Activated CD8-positive, alpha-beta T cell treated with anti-CD3 and anti-CD28 coated beads, Interleukin-2, amount 10 ng/mL, durations not matched to agents 7 days and 5 days (primary cell): ENCODE measurements at regions of chr13 and their contacts with region 1.

Region 1: DNA sequence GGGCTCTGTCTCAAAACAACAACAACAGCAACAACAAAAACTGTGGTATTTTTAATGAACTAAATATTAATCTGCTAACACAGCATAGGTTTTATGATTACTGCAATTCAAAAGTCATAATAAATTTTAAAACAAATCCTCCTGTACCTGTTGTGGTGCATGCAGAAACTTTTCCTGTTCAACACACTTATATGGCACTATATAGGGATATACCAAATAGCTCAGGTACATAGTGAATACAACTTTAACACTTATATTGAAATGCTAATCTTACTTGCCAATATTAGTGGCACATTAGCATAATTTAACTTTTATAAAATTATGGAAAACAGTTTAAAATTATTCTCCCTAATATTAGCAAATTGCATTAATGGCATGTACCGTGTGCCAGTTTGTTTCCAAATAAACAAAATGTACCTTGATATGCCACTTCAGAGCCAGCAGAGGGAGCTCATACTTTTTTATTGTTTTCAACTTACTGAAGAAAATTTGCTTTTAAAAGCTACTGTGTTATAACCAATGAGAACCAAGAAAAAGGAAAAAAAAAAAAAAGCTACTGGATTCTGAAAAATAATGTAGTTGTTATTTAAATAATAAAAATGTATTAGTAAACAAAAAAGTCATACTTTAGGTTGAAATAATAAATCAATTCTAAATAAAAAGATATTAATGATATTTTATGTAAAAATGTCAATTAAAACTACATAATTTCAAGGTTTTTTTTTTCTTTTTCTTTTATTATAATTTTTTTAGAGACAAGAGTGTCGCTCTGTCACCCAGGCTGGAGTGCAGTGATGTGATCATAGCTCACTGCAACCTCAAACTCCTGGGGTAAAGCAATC is 18.0 kb upstream of the RBM26 start:
- DNase-seq: no peak
- ATAC-seq: no peak
- H3K4me3 Mint-ChIP-seq: no peak overlapping the region
- H3K27ac Mint-ChIP-seq: no peak overlapping the region
- H3K4me1 Mint-ChIP-seq: peaks cover 11% of the 10 kb centered on the region
- H3K27me3 Mint-ChIP-seq: peaks cover 1% of the 10 kb centered on the region

Region 2: GRCh38 chr13:79405829-79406596 is 18.0 kb before region 1 on chr13 and contains the start of gene RBM26:
- CTCF ChIA-PET with region 1: interaction called, 18 read pairs
- POLR2A ChIA-PET with region 1: no interaction called
- DNase-seq: peak; percentile 97
- ATAC-seq: peak; percentile 90
- H3K4me3 Mint-ChIP-seq: no peak within 1 kb of the TSS
- H3K27ac Mint-ChIP-seq: peak within 1 kb of the TSS; percentile 97
- H3K4me1 Mint-ChIP-seq: peaks cover 22% of the 10 kb centered on the region
- H3K27me3 Mint-ChIP-seq: no peaks in the 10 kb centered on the region
- total RNA-seq, gene RBM26: 50.6 to 52.0 TPM

Region 3: GRCh38 chr13:79445968-79446645 is 22.1 kb after region 1 on chr13:
- CTCF ChIA-PET with region 1: interaction called, 19 read pairs
- POLR2A ChIA-PET with region 1: interaction called, 5 read pairs
- DNase-seq: no peak
- ATAC-seq: peak; percentile 40
- H3K4me3 Mint-ChIP-seq: no peak overlapping the region
- H3K27ac Mint-ChIP-seq: no peak overlapping the region
- H3K4me1 Mint-ChIP-seq: peaks cover 50% of the 10 kb centered on the region
- H3K27me3 Mint-ChIP-seq: no peaks in the 10 kb centered on the region

Region 4: DNA sequence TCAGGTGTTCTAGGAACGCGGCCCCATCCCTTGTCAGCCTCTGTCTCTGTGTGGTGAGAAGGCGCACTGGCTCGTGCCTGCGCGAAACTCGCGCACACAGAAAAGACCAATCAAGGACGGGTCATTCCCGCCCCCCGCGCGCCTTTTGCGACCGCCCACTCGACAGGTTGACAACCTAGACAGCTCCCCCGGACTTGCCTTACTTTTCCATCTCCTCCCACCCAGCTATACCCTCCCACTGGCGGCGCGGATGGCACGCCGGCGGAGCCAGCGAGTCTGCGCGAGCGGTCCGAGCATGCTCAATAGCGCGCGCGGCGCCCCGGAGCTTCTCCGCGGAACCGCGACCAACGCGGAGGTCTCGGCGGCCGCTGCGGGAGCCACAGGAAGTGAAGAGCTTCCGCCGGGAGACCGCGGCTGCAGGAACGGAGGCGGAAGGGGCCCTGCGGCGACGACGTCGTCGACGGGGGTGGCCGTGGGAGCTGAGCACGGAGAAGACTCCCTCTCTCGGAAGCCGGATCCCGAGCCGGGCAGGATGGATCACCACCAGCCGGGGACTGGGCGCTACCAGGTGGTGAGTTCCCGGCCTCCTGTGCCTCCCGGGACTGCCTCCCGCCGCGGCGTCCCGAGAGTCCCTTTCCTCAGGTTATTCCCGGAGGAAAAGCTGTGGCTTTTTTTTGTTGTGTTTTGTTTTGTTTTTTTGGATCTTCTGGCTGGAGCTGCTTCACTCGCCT is 57.1 kb after region 1 on chr13 and contains the start of gene NDFIP2:
- CTCF ChIA-PET with region 1: interaction called, 28 read pairs
- POLR2A ChIA-PET with region 1: no interaction called
- DNase-seq: peak; percentile 88
- ATAC-seq: peak; percentile 88
- H3K4me3 Mint-ChIP-seq: peak within 1 kb of the TSS; percentile 79
- H3K27ac Mint-ChIP-seq: peak within 1 kb of the TSS; percentile 77
- H3K4me1 Mint-ChIP-seq: peaks cover 58% of the 10 kb centered on the region
- H3K27me3 Mint-ChIP-seq: peaks cover 12% of the 10 kb centered on the region
- total RNA-seq, gene NDFIP2: 13.4 to 15.3 TPM

Region 5: GRCh38 chr13:79528759-79529191 is 104.8 kb after region 1 on chr13:
- CTCF ChIA-PET with region 1: interaction called, 53 read pairs
- POLR2A ChIA-PET with region 1: no interaction called
- DNase-seq: no peak
- ATAC-seq: no peak
- H3K4me3 Mint-ChIP-seq: no peak overlapping the region
- H3K27ac Mint-ChIP-seq: no peak overlapping the region
- H3K4me1 Mint-ChIP-seq: peaks cover 27% of the 10 kb centered on the region
- H3K27me3 Mint-ChIP-seq: no peaks in the 10 kb centered on the region

Region 6: GRCh38 chr13:79547211-79548195 is 123.5 kb after region 1 on chr13:
- CTCF ChIA-PET with region 1: interaction called, 71 read pairs
- POLR2A ChIA-PET with region 1: interaction called, 3 read pairs
- DNase-seq: no peak
- ATAC-seq: no peak
- H3K4me3 Mint-ChIP-seq: no peak overlapping the region
- H3K27ac Mint-ChIP-seq: no peak overlapping the region
- H3K4me1 Mint-ChIP-seq: peaks cover 2% of the 10 kb centered on the region
- H3K27me3 Mint-ChIP-seq: no peaks in the 10 kb centered on the region

Region 7: DNA sequence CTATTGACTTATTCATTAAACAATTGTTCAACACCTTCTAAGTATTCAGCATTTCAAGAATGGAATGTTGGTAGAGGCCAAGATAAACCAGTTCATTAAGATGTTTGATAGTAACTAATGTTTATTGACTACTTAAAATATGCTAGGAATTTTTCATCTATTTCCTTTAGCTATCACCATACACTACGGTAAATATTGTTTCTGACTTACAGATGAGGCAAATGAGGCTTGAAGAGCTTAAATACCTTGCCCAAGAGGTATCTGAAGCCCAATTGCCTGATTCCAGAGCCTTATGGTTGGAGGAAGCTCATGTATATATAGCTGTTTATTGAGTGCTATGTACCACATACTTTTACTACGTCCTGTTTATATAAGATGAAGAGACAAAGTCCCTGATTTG is 343.1 kb after region 1 on chr13:
- CTCF ChIA-PET with region 1: no interaction called
- POLR2A ChIA-PET with region 1: no interaction called
- DNase-seq: no peak
- ATAC-seq: no peak
- H3K4me3 Mint-ChIP-seq: no peak overlapping the region
- H3K27ac Mint-ChIP-seq: no peak overlapping the region
- H3K4me1 Mint-ChIP-seq: no peaks in the 10 kb centered on the region
- H3K27me3 Mint-ChIP-seq: no peaks in the 10 kb centered on the region